ENCODE measurements at regions of chr11 and their contacts with region 1.

Region 1: GRCh38 chr11:64778508-64779346 is at the start of gene SF1:
- DNase-seq: peak; percentile 97 to 100 (median 99)
- ATAC-seq: peak; percentile 82
- H3K4me3 ChIP-seq: peak within 1 kb of the TSS; percentile 70 to 97
- H3K4me3 Mint-ChIP-seq: peak within 1 kb of the TSS; percentile 93
- H3K27ac ChIP-seq: peak within 1 kb of the TSS; percentile 93 to 98
- H3K27ac Mint-ChIP-seq: peak within 1 kb of the TSS; percentile 99
- H3K4me1 ChIP-seq: peaks cover 53% of the 10 kb centered on the region
- H3K4me1 Mint-ChIP-seq: peaks cover 58% of the 10 kb centered on the region
- H3K27me3 ChIP-seq: no peaks in the 10 kb centered on the region
- H3K27me3 Mint-ChIP-seq: no peaks in the 10 kb centered on the region
- CTCF ChIP-seq: no peak
- total RNA-seq, gene SF1: 1,574 to 1,625 TPM

Region 2: GRCh38 chr11:64767344-64768299 is 11.1 kb before region 1 on chr11:
- CTCF ChIA-PET with region 1: interaction called, 69 read pairs
- POLR2A ChIA-PET with region 1: interaction called, 186 read pairs
- intact Hi-C with region 1: loop called (anchors 1 kb)
- DNase-seq: peak; percentile 65 to 91 (median 86)
- ATAC-seq: peak; percentile 25
- H3K4me3 ChIP-seq: peak overlapping the region in 1 of 2 experiments; percentile 33
- H3K4me3 Mint-ChIP-seq: peak overlapping the region; percentile 58
- H3K27ac ChIP-seq: peak overlapping the region; percentile 11 to 44
- H3K27ac Mint-ChIP-seq: peak overlapping the region; percentile 94
- H3K4me1 ChIP-seq: peaks cover 96% of the 10 kb centered on the region
- H3K4me1 Mint-ChIP-seq: peaks cover 88% of the 10 kb centered on the region
- H3K27me3 ChIP-seq: no peaks in the 10 kb centered on the region
- H3K27me3 Mint-ChIP-seq: no peaks in the 10 kb centered on the region
- CTCF ChIP-seq: peak; percentile 81

Region 3: GRCh38 chr11:64803163-64803845 is 24.6 kb after region 1 on chr11 and contains the start of gene MAP4K2:
- CTCF ChIA-PET with region 1: interaction called, 5 read pairs
- POLR2A ChIA-PET with region 1: interaction called, 29 read pairs
- intact Hi-C with region 1: loop called (anchors 1 kb)
- DNase-seq: peak; percentile 62 to 94 (median 83)
- ATAC-seq: peak; percentile 92
- H3K4me3 ChIP-seq: peak within 1 kb of the TSS; percentile 70 to 79
- H3K4me3 Mint-ChIP-seq: peak within 1 kb of the TSS; percentile 83
- H3K27ac ChIP-seq: peak within 1 kb of the TSS; percentile 65 to 93
- H3K27ac Mint-ChIP-seq: peak within 1 kb of the TSS; percentile 90
- H3K4me1 ChIP-seq: peaks cover 30% of the 10 kb centered on the region
- H3K4me1 Mint-ChIP-seq: peaks cover 37% of the 10 kb centered on the region
- H3K27me3 ChIP-seq: no peaks in the 10 kb centered on the region
- H3K27me3 Mint-ChIP-seq: no peaks in the 10 kb centered on the region
- CTCF ChIP-seq: no peak
- total RNA-seq, gene MAP4K2: 56.2 to 60.1 TPM

Region 4: DNA sequence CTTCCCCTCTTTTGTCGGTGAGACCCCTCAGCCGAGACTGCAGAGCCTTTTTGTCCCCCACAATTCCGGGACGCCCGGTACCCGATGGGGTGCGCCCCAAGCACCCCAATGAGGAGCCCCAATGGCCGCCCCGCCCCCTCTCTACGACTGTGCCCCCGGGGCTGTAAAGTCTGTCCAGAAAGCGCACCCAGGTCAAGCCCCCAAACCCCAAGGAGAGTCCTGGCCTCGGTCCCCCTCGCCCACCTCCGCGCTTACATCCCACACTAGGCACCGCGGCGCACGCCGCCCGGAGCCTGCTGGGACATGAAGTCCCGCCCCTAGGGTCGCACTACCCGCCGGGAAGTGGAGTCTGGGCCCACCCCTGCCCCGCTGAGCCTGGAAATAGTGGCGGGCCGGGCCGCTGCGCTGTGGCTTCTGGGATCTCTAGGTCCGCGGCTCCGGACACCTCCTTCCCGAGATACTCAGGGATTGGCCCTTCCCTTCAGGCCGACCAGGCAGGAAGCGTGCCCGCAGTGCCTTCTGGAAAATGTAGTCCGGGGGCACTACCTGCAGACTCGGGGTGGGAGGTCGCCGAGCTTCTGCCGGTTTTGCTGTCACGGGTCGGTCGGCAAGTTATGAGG is 31.7 kb after region 1 on chr11 and contains the start of gene MEN1:
- CTCF ChIA-PET with region 1: no interaction called
- POLR2A ChIA-PET with region 1: interaction called, 29 read pairs
- intact Hi-C with region 1: loop called (anchors 1 to 2 kb)
- DNase-seq: peak; percentile 49 to 87 (median 75)
- ATAC-seq: peak; percentile 87
- H3K4me3 ChIP-seq: peak within 1 kb of the TSS; percentile 79 to 99
- H3K4me3 Mint-ChIP-seq: peak within 1 kb of the TSS; percentile 95
- H3K27ac ChIP-seq: peak within 1 kb of the TSS; percentile 60 to 92
- H3K27ac Mint-ChIP-seq: peak within 1 kb of the TSS; percentile 94
- H3K4me1 ChIP-seq: peaks cover 14% of the 10 kb centered on the region
- H3K4me1 Mint-ChIP-seq: peaks cover 31% of the 10 kb centered on the region
- H3K27me3 ChIP-seq: no peaks in the 10 kb centered on the region
- H3K27me3 Mint-ChIP-seq: no peaks in the 10 kb centered on the region
- CTCF ChIP-seq: no peak
- total RNA-seq, gene MEN1: 17.6 to 19.1 TPM

Region 5: DNA sequence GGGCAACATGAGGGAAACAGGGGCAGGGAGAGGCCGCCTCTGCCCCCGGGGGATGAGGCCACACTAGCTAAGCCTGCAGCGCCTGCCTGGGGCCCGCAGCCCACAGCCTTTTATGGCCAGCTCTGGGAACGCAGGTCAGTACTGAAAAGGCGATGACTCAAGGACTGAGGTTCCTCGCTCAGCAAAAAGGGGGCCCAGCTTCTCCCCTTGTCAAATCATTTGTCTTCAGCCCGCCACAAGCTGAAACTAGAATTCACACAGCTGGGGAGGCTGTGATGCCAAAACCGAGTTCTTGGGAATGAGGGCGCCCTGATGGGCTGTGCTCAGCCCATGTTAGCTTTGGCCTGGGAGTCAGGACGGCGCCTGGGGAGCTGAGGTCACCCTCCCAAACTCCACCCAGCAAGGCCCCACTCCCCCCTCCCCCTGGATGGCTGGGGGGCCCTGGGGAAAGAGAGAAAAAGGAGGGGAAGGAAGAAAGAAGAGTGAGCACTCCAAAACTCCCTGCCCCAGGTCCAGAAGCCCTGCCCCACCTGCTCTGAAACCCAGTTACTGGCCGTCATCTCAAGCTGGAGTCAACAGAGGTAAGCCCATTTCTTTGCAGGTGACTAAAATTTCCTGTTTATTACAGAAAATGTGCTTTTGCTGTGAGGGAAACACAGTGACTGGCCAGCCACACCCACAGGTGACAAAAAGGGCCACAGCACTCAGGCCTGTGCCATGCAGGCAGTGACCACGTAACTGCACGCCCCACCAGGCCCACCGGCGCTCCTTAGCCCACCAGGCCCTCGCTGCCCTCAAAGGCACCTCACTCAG is 86.0 kb after region 1 on chr11:
- CTCF ChIA-PET with region 1: interaction called, 4 read pairs
- POLR2A ChIA-PET with region 1: interaction called, 17 read pairs
- intact Hi-C with region 1: no loop called
- DNase-seq: peak in 4 of 9 experiments; percentile 19 to 61 (median 48)
- ATAC-seq: peak; percentile 10
- H3K4me3 ChIP-seq: peak overlapping the region; percentile 36 to 41
- H3K4me3 Mint-ChIP-seq: peak overlapping the region; percentile 71
- H3K27ac ChIP-seq: peak overlapping the region; percentile 57 to 87
- H3K27ac Mint-ChIP-seq: peak overlapping the region; percentile 95
- H3K4me1 ChIP-seq: peaks cover 96% of the 10 kb centered on the region
- H3K4me1 Mint-ChIP-seq: peaks cover 88% of the 10 kb centered on the region
- H3K27me3 ChIP-seq: no peaks in the 10 kb centered on the region
- H3K27me3 Mint-ChIP-seq: no peaks in the 10 kb centered on the region
- CTCF ChIP-seq: no peak